Transverse colon (tissue), 4 donors: ENCODE measurements at regions of chr6 and their contacts with region 1.

Region 1: GRCh38 chr6:149925974-149926777 is 3.3 kb upstream of the RAET1G start:
- DNase-seq: peak; percentile 93
- H3K4me3 ChIP-seq: peak overlapping the region; percentile 28 to 62 (median 45)
- H3K27ac ChIP-seq: peak overlapping the region in 3 of 4 donors; percentile 28 to 46 (median 39)
- H3K4me1 ChIP-seq: peaks cover 10 to 33% (median 21%) of the 10 kb centered on the region in 4 donors
- H3K27me3 ChIP-seq: peaks cover 71% of the 10 kb centered on the region
- CTCF ChIP-seq: peak; percentile 91 to 99 (median 92)
- EP300 ChIP-seq: no peak
- POLR2A ChIP-seq: no peak

Region 2: GRCh38 chr6:149723771-149724417 is 202.3 kb before region 1 on chr6:
- in situ Hi-C with region 1: loop called in 1 of 4 experiments (anchors 10 kb)
- intact Hi-C with region 1: no loop called
- DNase-seq: peak; percentile 60
- H3K4me3 ChIP-seq: no peak overlapping the region
- H3K27ac ChIP-seq: peak overlapping the region in 1 of 4 donors; percentile 39
- H3K4me1 ChIP-seq: peaks cover 0 to 10% (median 7%) of the 10 kb centered on the region in 4 donors
- H3K27me3 ChIP-seq: no peaks in the 10 kb centered on the region
- CTCF ChIP-seq: peak; percentile 63 to 77 (median 66)
- EP300 ChIP-seq: no peak
- POLR2A ChIP-seq: no peak

Region 3: DNA sequence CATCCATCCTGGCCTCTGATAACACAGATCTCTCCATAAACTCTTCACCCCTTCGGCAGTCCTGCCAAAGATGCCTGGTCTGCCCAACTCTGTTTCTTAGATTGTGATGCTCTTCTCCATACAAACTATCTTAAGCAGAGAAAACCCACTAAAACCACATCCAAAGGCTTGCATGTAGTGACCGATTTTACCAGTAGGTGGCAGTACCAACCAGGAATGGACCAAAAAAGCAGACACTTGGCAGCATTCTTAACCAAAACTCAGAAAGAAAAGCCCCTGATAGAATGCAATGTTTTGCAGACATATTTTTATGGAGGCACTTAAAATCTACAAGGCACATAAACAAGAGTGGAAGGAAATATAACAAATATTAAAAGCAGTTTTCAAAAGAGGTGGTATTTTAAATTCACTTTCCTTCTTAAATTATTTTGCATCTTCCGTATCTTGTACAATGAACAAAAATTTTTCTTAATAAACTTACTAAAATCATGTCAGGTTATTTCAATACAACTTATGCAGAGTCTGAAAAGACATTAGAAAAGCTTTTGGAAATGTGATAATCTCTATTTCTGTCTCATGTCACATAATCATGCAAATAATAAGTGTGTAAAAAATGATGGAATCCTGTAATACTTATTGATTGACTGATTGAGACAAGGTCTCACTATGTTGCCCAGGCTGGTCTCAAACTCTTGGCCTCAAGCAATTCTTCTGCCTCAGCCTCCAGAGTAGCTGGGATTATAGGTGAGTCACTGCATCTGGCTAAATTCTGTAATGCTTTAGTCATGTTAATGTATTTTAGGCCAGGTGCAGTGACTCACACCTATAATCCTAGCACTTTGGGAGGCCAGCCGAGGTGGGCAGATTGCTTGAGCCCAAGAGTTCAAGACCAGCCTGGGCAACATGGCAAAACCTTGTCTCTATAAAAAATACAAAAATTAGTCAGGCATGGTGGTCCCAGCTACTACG is 91.4 kb before region 1 on chr6:
- in situ Hi-C with region 1: loop called in 2 of 4 experiments (anchors 5 kb)
- intact Hi-C with region 1: loop called (anchors 2 kb)
- DNase-seq: peak; percentile 67
- H3K4me3 ChIP-seq: no peak overlapping the region
- H3K27ac ChIP-seq: no peak overlapping the region
- H3K4me1 ChIP-seq: peaks cover 0 to 4% (median 1%) of the 10 kb centered on the region in 4 donors
- H3K27me3 ChIP-seq: no peaks in the 10 kb centered on the region
- CTCF ChIP-seq: peak; percentile 89 to 95 (median 92)
- EP300 ChIP-seq: no peak
- POLR2A ChIP-seq: no peak

Region 4: DNA sequence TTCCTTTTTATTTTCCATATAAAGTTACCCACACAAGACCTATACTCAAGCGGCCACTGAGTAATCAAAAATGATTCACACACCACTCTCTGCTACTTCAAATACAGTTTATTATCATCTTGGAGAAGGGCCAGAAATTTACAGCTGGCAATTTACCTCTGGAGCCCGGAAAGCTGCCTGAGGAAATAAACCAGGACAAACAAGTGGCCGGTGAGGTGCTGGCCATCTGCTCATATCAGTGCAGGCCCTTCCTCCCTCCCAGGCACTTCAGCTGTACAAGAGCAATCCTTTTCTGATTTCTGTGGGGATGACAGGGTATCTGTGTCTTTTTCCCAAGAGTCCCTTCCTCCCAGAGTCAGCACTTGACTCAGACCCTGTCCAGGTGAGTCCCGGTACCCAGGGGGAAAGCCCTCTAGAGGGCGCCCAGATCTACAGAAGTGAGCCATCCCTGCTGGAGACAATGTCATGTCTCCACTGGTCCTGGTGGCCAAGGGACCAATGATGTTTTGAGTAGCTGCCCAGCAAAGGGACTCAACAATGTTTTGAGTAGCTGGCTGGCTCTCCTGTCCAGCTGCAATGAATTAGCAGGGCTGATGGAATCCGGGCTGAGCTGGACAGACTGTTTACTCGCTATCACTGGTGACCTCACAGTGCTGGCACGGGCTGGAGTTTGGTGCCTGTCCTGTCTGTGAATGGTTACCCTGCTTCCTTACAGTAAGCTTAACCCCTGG is 85.7 kb before region 1 on chr6:
- in situ Hi-C with region 1: loop called in 2 of 4 experiments (anchors 5 to 10 kb)
- intact Hi-C with region 1: loop called (anchors 2 kb)
- DNase-seq: peak; percentile 76
- H3K4me3 ChIP-seq: no peak overlapping the region
- H3K27ac ChIP-seq: peak overlapping the region in 2 of 4 donors; percentile 36 to 47
- H3K4me1 ChIP-seq: peaks cover 0 to 12% (median 8%) of the 10 kb centered on the region in 4 donors
- H3K27me3 ChIP-seq: no peaks in the 10 kb centered on the region
- CTCF ChIP-seq: peak; percentile 31 to 66 (median 45)
- EP300 ChIP-seq: no peak
- POLR2A ChIP-seq: no peak